Activated naive CD4-positive, alpha-beta T cell treated with anti-CD3 and anti-CD28 coated beads for 36 hours (primary cell): ENCODE measurements at regions of chr5 and their contacts with region 1.

Region 1: DNA sequence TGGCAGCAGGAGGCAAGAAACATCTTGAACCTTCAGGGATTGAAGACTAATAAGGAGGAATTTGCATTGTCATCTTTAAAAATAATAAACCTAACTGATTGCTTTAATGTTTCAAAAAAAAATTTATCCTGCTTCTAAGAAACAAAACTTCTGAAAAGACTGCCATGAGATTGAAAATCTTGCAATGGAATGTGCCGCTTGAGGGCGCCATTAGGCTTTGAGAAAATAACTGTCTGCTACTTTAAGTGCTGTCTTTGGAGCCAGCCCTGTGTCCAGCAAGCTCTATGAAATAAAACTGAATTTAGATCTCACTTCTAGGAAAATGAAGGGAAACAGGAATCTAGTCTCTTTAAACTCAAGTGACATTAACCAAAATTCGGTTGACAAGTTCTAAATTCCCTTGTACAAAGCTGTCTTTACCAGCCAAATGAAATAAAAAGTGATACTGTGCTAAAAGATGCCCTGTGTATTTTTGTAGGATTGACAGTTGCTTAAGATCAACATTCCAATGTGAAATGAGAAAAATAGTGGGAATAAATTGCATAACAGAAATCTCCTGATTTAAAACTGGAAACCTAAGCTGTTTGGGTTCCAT is 79.4 kb downstream of the ESM1 start:
- DNase-seq: peak; percentile 85
- H3K4me3 Mint-ChIP-seq: no peak overlapping the region
- H3K27ac Mint-ChIP-seq: no peak overlapping the region
- H3K4me1 Mint-ChIP-seq: peaks cover 13% of the 10 kb centered on the region
- H3K27me3 Mint-ChIP-seq: peaks cover 20% of the 10 kb centered on the region

Region 2: DNA sequence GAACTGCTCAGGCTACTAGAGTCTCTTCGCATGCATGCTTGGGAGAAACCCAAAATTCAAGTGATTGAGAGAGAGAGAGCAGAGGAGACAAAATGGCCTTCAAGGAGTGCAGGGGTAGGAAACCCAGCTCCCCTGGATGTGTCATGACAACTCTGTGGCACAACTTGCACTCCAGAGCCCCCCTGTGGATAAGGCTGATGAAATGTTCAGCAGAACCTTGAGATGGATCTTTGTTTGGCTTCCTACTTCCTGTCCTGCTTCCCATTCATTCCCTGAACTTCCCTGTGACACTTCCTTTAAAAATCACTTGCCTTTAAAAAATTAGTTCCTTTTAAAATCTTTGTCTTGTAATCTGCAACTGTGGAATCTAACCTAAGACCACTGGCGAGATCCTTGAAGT is 1554.7 kb before region 1 on chr5:
- CTCF ChIA-PET with region 1: no interaction called
- intact Hi-C with region 1: no loop called
- DNase-seq: no peak
- H3K4me3 Mint-ChIP-seq: no peak overlapping the region
- H3K27ac Mint-ChIP-seq: no peak overlapping the region
- H3K4me1 Mint-ChIP-seq: no peaks in the 10 kb centered on the region
- H3K27me3 Mint-ChIP-seq: peaks cover 7% of the 10 kb centered on the region

Region 3: DNA sequence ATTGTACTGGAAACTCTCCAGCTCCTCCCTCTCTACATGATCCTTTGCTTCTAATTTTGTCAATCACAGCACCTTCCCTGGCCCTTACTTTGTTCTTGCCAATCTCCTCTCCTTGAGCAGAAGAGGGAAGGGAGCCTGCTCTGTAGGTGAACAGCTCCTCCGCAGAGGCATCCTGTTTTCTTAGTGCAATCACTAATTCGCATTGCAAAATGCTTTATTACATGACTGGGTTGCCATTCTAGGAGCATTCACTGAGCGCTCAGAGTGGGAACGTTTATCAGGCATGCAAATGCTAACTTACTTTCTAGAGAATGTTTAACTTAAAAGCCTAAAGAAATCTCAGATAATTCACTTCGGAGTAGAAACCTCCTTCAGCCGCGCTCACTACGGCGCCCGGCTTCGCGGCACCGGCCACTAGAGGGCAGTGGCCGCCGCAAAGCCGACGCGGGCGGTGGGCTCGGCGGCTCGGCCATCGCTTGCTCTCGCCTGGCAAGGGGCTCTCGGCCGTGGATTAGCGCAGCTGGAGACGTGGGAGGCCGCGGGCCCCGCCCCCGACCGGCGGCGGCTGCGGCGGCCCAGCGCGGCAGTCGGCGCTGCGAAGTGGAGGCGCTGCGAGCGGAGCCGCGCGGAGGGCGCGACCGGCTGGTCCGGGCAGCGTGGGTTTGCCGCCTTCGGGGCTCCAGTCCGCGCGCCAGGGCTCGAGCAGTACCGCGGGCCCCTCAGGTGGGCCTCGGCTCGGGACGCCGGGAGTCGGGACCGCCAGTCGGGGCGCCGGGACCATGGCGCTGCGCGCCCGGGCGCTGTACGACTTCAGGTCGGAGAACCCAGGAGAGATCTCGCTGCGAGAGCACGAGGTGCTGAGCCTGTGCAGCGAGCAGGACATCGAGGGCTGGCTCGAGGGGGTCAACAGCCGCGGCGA is 388.6 kb before region 1 on chr5 and contains the start of gene SNX18:
- CTCF ChIA-PET with region 1: interaction called, 7 read pairs
- intact Hi-C with region 1: loop called (anchors 1 kb)
- DNase-seq: peak; percentile 91
- H3K4me3 Mint-ChIP-seq: peak within 1 kb of the TSS; percentile 56
- H3K27ac Mint-ChIP-seq: no peak within 1 kb of the TSS
- H3K4me1 Mint-ChIP-seq: peaks cover 38% of the 10 kb centered on the region
- H3K27me3 Mint-ChIP-seq: no peaks in the 10 kb centered on the region
- total RNA-seq, gene SNX18: 3.9 to 4.4 TPM

Region 4: GRCh38 chr5:54944364-54944763 is 38.3 kb after region 1 on chr5:
- CTCF ChIA-PET with region 1: interaction called, 76 read pairs
- intact Hi-C with region 1: loop called (anchors 1 kb)
- DNase-seq: peak; percentile 60
- H3K4me3 Mint-ChIP-seq: no peak overlapping the region
- H3K27ac Mint-ChIP-seq: no peak overlapping the region
- H3K4me1 Mint-ChIP-seq: no peaks in the 10 kb centered on the region
- H3K27me3 Mint-ChIP-seq: no peaks in the 10 kb centered on the region

Region 5: GRCh38 chr5:55037046-55037771 is 131.2 kb after region 1 on chr5:
- CTCF ChIA-PET with region 1: interaction called, 6 read pairs
- intact Hi-C with region 1: loop called (anchors 1 kb)
- DNase-seq: peak; percentile 92
- H3K4me3 Mint-ChIP-seq: no peak overlapping the region
- H3K27ac Mint-ChIP-seq: peak overlapping the region; percentile 83
- H3K4me1 Mint-ChIP-seq: peaks cover 20% of the 10 kb centered on the region
- H3K27me3 Mint-ChIP-seq: no peaks in the 10 kb centered on the region

Region 6: GRCh38 chr5:55146543-55147151 is 240.6 kb after region 1 on chr5:
- CTCF ChIA-PET with region 1: interaction called, 64 read pairs
- intact Hi-C with region 1: loop called (anchors 1 kb)
- DNase-seq: peak; percentile 90
- H3K4me3 Mint-ChIP-seq: no peak overlapping the region
- H3K27ac Mint-ChIP-seq: no peak overlapping the region
- H3K4me1 Mint-ChIP-seq: peaks cover 12% of the 10 kb centered on the region
- H3K27me3 Mint-ChIP-seq: peaks cover 4% of the 10 kb centered on the region

Region 7: GRCh38 chr5:55364537-55365055 is 458.6 kb after region 1 on chr5:
- CTCF ChIA-PET with region 1: no interaction called
- intact Hi-C with region 1: loop called (anchors 10 kb)
- DNase-seq: peak; percentile 28
- H3K4me3 Mint-ChIP-seq: no peak overlapping the region
- H3K27ac Mint-ChIP-seq: peak overlapping the region; percentile 25
- H3K4me1 Mint-ChIP-seq: peaks cover 19% of the 10 kb centered on the region
- H3K27me3 Mint-ChIP-seq: no peaks in the 10 kb centered on the region